CD4-positive, alpha-beta T cell (primary cell): ENCODE measurements at regions of chr2 and their contacts with region 1.

Region 1: DNA sequence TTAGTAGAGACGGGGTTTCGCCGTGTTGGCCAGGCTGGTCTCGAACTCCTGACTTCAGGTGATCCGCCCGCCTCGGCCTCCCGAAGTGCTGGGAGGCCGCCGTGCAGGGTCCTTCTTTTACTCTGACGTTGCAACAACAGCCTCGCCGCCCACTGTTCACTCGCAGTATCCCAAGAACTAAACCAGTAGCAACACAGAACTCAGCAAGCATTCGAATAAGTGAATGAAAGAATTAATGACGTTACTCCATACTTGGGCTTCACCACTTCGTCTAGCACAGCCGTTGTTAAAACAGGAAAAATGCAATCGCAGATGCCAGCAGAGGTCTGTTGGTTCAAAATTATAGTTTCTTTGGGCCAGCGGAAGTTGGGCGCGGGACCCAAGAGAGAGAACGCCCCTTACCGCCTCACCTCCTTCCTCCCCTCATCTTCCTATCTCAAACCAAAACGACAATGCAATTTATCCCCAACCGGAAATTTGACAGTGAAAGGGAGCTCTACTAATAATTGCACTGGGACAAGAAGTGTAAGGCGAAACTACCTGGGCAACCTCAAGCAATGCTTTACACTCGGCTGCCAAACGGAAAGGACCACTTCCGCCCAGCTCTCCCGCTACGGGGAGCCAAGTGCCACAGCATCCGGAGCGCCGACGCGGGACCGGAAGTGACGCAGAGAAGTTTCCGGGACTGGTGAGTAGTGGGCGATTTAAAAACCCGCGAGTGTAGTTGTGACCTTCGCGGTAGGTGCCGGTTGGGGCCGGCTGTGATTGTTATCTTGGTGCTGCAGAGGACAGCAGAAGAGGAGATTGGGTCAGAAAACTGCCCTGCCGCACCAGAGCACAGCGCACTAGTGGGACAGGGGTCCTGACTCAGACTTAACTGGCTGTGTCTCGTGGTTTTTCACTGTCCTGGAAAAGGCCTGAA is at the starts of genes NIF3L1 and PPIL3:
- DNase-seq: peak; percentile 93 to 99 (median 95)
- ATAC-seq: peak; percentile 67
- H3K4me3 ChIP-seq: peak within 1 kb of the TSS; percentile 64
- H3K4me3 Mint-ChIP-seq: peak within 1 kb of the TSS; percentile 94
- H3K27ac ChIP-seq: peak within 1 kb of the TSS; percentile 92 to 94
- H3K27ac Mint-ChIP-seq: peak within 1 kb of the TSS; percentile 99
- H3K4me1 ChIP-seq: peaks cover 36% of the 10 kb centered on the region
- H3K4me1 Mint-ChIP-seq: peaks cover 42% of the 10 kb centered on the region
- H3K27me3 ChIP-seq: no peaks in the 10 kb centered on the region
- H3K27me3 Mint-ChIP-seq: no peaks in the 10 kb centered on the region
- CTCF ChIP-seq: no peak
- total RNA-seq, gene NIF3L1: 6.1 to 6.7 TPM
- total RNA-seq, gene PPIL3: 23.1 to 29.8 TPM

Region 2: DNA sequence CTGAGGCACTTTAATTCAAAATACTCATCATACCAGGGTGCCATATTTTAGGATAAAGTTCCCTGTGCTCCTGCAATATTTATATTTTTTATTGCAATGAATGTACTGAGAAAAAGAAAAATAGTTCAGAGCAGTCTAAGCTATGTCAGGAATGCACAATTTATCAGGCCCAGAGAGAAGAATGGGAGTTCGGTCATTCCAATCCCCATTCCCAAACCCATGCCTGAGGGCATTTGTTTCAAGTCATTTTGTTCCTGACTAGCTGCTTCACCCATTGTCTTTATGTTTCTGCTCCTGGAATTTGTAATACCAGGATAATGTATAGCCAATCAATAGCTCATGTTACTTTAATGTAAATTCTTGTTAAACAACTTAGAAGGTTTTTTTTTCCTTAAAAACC is 1013.6 kb before region 1 on chr2:
- CTCF ChIA-PET with region 1: no interaction called
- POLR2A ChIA-PET with region 1: no interaction called
- intact Hi-C with region 1: no loop called
- DNase-seq: no peak
- ATAC-seq: no peak
- H3K4me3 ChIP-seq: no peak overlapping the region
- H3K4me3 Mint-ChIP-seq: no peak overlapping the region
- H3K27ac ChIP-seq: no peak overlapping the region
- H3K27ac Mint-ChIP-seq: no peak overlapping the region
- H3K4me1 ChIP-seq: no peaks in the 10 kb centered on the region
- H3K4me1 Mint-ChIP-seq: no peaks in the 10 kb centered on the region
- H3K27me3 ChIP-seq: no peaks in the 10 kb centered on the region
- H3K27me3 Mint-ChIP-seq: peaks cover 35% of the 10 kb centered on the region
- CTCF ChIP-seq: no peak

Region 3: DNA sequence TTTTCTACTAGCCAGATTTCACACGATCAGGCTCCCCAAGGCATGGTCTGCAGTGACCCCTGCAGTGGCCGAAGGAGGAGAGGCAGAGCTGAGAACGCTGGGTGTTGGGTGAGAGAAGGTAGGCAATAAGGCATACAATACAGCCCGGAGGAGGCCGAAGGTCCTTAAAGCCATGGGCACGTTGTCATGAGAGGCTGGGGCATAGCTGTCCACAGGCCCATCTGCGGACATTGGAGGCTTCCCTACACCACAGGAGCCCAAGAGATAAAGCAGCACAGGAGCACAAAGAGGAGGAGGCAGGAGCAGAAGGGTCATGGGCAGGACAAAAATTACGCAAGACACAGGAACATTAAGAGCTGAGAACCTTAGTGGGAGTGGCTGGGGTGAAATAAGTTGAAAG is 93.9 kb before region 1 on chr2:
- CTCF ChIA-PET with region 1: no interaction called
- POLR2A ChIA-PET with region 1: no interaction called
- intact Hi-C with region 1: no loop called
- DNase-seq: no peak
- ATAC-seq: no peak
- H3K4me3 ChIP-seq: no peak overlapping the region
- H3K4me3 Mint-ChIP-seq: no peak overlapping the region
- H3K27ac ChIP-seq: no peak overlapping the region
- H3K27ac Mint-ChIP-seq: no peak overlapping the region
- H3K4me1 ChIP-seq: no peaks in the 10 kb centered on the region
- H3K4me1 Mint-ChIP-seq: no peaks in the 10 kb centered on the region
- H3K27me3 ChIP-seq: no peaks in the 10 kb centered on the region
- H3K27me3 Mint-ChIP-seq: no peaks in the 10 kb centered on the region
- CTCF ChIP-seq: no peak

Region 4: GRCh38 chr2:200850512-200851256 is 38.3 kb before region 1 on chr2:
- CTCF ChIA-PET with region 1: interaction called, 5 read pairs
- POLR2A ChIA-PET with region 1: interaction called, 4 read pairs
- intact Hi-C with region 1: loop called (anchors 5 kb)
- DNase-seq: no peak
- ATAC-seq: no peak
- H3K4me3 ChIP-seq: no peak overlapping the region
- H3K4me3 Mint-ChIP-seq: peak overlapping the region; percentile 20
- H3K27ac ChIP-seq: no peak overlapping the region
- H3K27ac Mint-ChIP-seq: peak overlapping the region; percentile 65
- H3K4me1 ChIP-seq: no peaks in the 10 kb centered on the region
- H3K4me1 Mint-ChIP-seq: peaks cover 21% of the 10 kb centered on the region
- H3K27me3 ChIP-seq: no peaks in the 10 kb centered on the region
- H3K27me3 Mint-ChIP-seq: no peaks in the 10 kb centered on the region
- CTCF ChIP-seq: no peak

Region 5: DNA sequence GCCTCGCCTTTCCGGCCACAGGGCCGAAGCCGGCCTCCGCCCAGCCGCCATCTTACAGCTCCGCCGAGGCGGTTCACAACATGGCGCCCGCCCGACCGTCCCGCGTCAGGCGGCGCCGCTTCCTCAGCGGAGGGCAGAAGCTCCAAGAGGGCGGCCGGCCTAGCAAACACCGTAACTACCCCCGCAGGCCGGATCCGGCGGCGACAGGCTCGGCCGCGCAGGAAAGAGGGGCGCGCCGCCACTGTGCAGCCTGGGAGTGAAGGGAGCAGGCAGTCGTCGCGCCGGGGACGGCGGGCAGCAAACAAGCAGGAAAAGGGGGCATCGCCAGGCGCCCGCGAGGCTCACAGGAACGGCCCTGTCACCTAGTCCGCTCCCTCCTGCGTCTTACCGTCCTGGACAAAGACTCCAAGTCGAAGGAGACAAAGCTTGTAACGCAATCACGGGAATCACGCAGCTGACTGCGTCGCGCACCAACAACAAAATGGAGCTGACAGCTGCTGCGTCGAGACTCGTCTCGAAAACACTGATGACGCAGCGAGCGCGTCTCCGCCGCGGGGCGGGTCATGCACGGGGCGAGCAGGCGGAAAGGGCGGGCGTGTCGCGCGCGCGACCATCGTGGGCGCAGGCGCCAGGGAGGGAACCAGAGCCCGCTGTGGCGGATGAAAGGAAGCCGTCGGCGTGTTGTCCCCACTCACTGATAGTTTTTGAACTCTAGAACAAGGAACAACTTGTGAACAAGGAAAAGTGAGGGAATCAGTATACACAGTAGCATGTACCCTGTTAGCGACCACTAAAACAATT is 24.6 kb before region 1 on chr2 and contains the start of gene CLK1:
- CTCF ChIA-PET with region 1: interaction called, 10 read pairs
- POLR2A ChIA-PET with region 1: interaction called, 267 read pairs
- intact Hi-C with region 1: loop called (anchors 1 to 2 kb)
- DNase-seq: peak; percentile 95 to 98 (median 97)
- ATAC-seq: peak; percentile 75
- H3K4me3 ChIP-seq: peak within 1 kb of the TSS; percentile 96
- H3K4me3 Mint-ChIP-seq: peak within 1 kb of the TSS; percentile 97
- H3K27ac ChIP-seq: peak within 1 kb of the TSS; percentile 100
- H3K27ac Mint-ChIP-seq: peak within 1 kb of the TSS; percentile 88
- H3K4me1 ChIP-seq: peaks cover 26% of the 10 kb centered on the region
- H3K4me1 Mint-ChIP-seq: peaks cover 48% of the 10 kb centered on the region
- H3K27me3 ChIP-seq: no peaks in the 10 kb centered on the region
- H3K27me3 Mint-ChIP-seq: peaks cover 4% of the 10 kb centered on the region
- CTCF ChIP-seq: no peak
- total RNA-seq, gene CLK1: 1,228 to 1,235 TPM

Region 6: DNA sequence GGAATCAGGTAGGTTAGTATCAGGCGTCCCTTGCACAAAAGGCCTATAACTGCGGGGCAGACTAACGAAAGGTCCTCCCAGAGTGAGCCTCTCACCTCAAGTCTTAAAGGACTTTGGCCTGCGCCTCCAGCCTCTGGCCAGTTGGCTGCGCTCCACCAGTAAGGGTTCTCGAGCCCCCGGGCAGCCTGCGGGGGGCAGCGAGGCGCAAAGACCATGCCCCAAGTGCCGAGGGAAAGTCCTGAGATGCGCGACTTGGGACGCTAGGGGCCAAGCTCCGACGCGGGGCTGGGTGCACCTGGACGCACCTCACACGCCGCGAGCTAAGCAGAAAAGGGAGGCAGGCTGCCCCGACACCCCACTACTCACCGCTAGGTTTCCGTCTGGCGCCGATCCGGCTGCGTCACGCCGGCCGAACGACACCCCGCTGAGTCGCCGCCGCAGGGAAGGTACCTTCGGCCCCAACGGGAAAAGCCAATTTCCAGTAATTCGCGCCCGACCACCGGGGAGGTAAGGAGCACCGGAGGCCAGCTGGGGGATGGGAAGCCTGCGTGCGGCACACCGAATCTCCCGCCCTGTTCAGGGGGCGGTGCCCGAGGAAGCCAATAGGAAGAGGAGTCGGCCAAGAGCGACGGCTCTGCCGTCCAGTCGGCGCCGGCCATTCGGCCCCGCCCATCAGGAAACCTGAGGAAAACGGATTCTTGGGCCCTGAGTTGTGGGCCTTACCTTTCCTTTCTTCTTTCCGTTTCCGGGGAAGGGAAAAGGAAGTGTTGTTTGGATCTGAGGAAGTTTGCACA is 74.4 kb after region 1 on chr2 and contains the start of gene ORC2:
- CTCF ChIA-PET with region 1: interaction called, 6 read pairs
- POLR2A ChIA-PET with region 1: interaction called, 25 read pairs
- intact Hi-C with region 1: no loop called
- DNase-seq: peak; percentile 87 to 96 (median 90)
- ATAC-seq: peak; percentile 95
- H3K4me3 ChIP-seq: peak within 1 kb of the TSS; percentile 98
- H3K4me3 Mint-ChIP-seq: peak within 1 kb of the TSS; percentile 99
- H3K27ac ChIP-seq: peak within 1 kb of the TSS; percentile 89 to 92
- H3K27ac Mint-ChIP-seq: peak within 1 kb of the TSS; percentile 100
- H3K4me1 ChIP-seq: peaks cover 25% of the 10 kb centered on the region
- H3K4me1 Mint-ChIP-seq: peaks cover 73% of the 10 kb centered on the region
- H3K27me3 ChIP-seq: no peaks in the 10 kb centered on the region
- H3K27me3 Mint-ChIP-seq: no peaks in the 10 kb centered on the region
- CTCF ChIP-seq: peak; percentile 74
- total RNA-seq, gene ORC2: 25.0 to 26.6 TPM

Region 7: GRCh38 chr2:200975672-200976071 is 86.7 kb after region 1 on chr2:
- CTCF ChIA-PET with region 1: no interaction called
- POLR2A ChIA-PET with region 1: no interaction called
- intact Hi-C with region 1: no loop called
- DNase-seq: no peak
- ATAC-seq: no peak
- H3K4me3 ChIP-seq: no peak overlapping the region
- H3K4me3 Mint-ChIP-seq: no peak overlapping the region
- H3K27ac ChIP-seq: no peak overlapping the region
- H3K27ac Mint-ChIP-seq: no peak overlapping the region
- H3K4me1 ChIP-seq: no peaks in the 10 kb centered on the region
- H3K4me1 Mint-ChIP-seq: no peaks in the 10 kb centered on the region
- H3K27me3 ChIP-seq: no peaks in the 10 kb centered on the region
- H3K27me3 Mint-ChIP-seq: no peaks in the 10 kb centered on the region
- CTCF ChIP-seq: no peak

Region 8: GRCh38 chr2:201007561-201007998 is 118.6 kb after region 1 on chr2:
- CTCF ChIA-PET with region 1: no interaction called
- POLR2A ChIA-PET with region 1: no interaction called
- intact Hi-C with region 1: no loop called
- DNase-seq: no peak
- ATAC-seq: no peak
- H3K4me3 ChIP-seq: no peak overlapping the region
- H3K4me3 Mint-ChIP-seq: no peak overlapping the region
- H3K27ac ChIP-seq: no peak overlapping the region
- H3K27ac Mint-ChIP-seq: no peak overlapping the region
- H3K4me1 ChIP-seq: no peaks in the 10 kb centered on the region
- H3K4me1 Mint-ChIP-seq: no peaks in the 10 kb centered on the region
- H3K27me3 ChIP-seq: no peaks in the 10 kb centered on the region
- H3K27me3 Mint-ChIP-seq: no peaks in the 10 kb centered on the region
- CTCF ChIP-seq: no peak

Region 9: GRCh38 chr2:201257956-201258665 is 369.1 kb after region 1 on chr2:
- CTCF ChIA-PET with region 1: no interaction called
- POLR2A ChIA-PET with region 1: interaction called, 5 read pairs
- intact Hi-C with region 1: loop called in 1 of 2 experiments (anchors 2 kb)
- DNase-seq: peak; percentile 90 to 99 (median 95)
- ATAC-seq: peak; percentile 71
- H3K4me3 ChIP-seq: peak overlapping the region; percentile 62
- H3K4me3 Mint-ChIP-seq: peak overlapping the region; percentile 89
- H3K27ac ChIP-seq: peak overlapping the region; percentile 93 to 100
- H3K27ac Mint-ChIP-seq: peak overlapping the region; percentile 97
- H3K4me1 ChIP-seq: peaks cover 74% of the 10 kb centered on the region
- H3K4me1 Mint-ChIP-seq: peaks cover 75% of the 10 kb centered on the region
- H3K27me3 ChIP-seq: no peaks in the 10 kb centered on the region
- H3K27me3 Mint-ChIP-seq: no peaks in the 10 kb centered on the region
- CTCF ChIP-seq: no peak